ENCODE measurements at regions of chr10 and their contacts with region 1.

Region 1: DNA sequence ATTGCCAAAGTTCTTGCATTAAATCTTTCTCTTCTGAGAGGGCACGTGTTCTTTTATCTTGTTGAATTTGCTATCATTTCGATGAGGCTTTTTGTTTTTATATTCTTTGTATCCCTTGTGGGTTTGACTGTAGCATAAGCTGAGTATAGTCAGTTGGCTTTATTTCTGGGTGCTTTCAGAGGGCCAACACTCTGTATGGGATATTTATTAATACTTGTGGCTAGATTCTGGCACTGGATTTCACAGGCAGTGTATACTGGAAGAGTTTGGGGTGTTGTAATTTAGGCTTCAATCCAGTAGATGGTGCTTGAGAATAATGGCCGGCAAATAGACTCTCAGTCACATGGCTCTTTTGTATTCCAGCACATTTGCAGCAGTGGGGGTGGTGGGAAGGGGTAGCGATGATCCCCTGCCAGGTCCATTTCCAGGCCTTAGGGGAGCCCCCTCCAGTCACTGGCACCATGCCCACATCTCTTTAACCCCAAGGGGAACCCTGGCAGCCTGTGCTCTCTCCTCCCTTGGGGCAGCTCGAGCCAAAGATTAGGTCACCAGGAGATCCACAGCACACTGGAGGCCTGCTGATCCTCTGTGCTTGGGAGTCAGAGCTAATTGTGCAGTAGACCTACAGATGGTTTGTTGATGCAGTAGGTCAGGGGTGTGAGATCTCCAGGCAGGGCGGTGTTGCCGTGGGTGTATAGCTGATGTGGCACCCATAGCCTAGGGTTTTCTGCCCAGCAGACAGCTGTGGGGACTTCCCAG is 81.8 kb downstream of the PTPN20 start:
- DNase-seq: no peak
- H3K4me3 ChIP-seq: no peak overlapping the region
- H3K27me3 ChIP-seq: no peaks in the 10 kb centered on the region; the same call in 1 of the 2 replicates
- CTCF ChIP-seq: peak; percentile 49

Region 2: DNA sequence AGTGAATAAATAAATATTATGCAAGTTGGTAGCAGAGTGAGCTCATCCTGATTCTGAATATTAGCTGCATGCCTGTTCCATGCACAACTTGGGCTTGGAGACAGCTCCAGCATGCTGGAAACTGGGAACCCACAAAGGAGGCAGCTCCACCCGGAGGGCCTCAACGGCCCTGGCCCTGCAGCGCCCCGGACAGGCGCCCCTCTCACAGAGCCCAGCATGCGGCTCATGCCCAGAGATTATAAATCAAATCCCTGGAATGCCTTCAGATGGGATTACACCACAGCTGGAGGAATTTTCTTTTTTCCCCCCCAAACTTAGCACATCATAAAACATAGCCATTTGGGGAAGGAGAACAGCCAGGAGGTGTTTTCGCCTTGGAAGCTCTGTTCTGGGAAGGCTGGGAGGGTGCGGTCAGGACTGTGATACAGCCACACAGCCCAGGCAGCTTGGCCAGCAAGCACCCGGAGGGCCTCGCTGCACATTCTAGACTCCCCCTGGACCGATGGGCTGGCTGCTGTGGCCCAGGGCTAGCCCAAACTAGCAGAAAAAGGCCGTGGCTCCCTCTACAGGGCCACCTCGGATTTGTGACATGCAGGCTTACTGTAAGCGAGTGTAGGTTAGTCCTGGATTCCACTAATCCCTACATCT is 20.6 kb after region 1 on chr10:
- CTCF ChIA-PET with region 1: interaction called, 11 read pairs
- POLR2A ChIA-PET with region 1: no interaction called
- DNase-seq: no peak
- H3K4me3 ChIP-seq: no peak overlapping the region
- H3K27me3 ChIP-seq: peaks cover 8% of the 10 kb centered on the region
- CTCF ChIP-seq: no peak

Region 3: GRCh38 chr10:47340608-47341170 is 347.7 kb after region 1 on chr10:
- CTCF ChIA-PET with region 1: interaction called, 12 read pairs
- POLR2A ChIA-PET with region 1: no interaction called
- DNase-seq: no peak
- H3K4me3 ChIP-seq: no peak overlapping the region
- H3K27me3 ChIP-seq: peaks cover 10% of the 10 kb centered on the region
- CTCF ChIP-seq: peak; percentile 97